H1 (cell line): ENCODE measurements at regions of chr12 and their contacts with region 1.

Region 1: DNA sequence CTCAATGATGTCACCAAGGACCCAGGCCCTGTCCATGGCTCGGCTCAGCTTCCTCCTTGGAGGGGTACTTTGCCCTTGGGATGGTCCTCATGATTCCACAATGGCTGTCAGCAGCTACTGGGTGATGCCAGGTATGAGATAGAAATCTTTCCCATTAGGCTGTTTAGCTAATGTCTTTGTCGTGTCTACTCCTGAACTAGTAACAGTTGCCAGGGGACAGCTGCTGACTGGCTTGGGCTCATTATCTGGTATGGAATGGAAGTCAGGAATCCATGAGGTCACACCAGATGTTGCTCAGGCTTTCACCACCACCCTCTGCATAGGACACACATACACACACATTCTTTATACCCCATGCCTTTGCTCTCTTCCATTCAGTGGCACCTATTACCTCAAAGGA is 9.2 kb downstream of the PRPH start:
- DNase-seq: no peak
- H3K4me3 ChIP-seq: no peak overlapping the region
- H3K27ac ChIP-seq: no peak overlapping the region
- H3K4me1 ChIP-seq: no peaks in the 10 kb centered on the region
- H3K27me3 ChIP-seq: no peaks in the 10 kb centered on the region; a peak in 4 of 7 replicates
- CTCF ChIP-seq: no peak
- EP300 ChIP-seq: no peak
- POLR2A ChIP-seq: no peak
- RAD21 ChIP-seq: no peak

Region 2: GRCh38 chr12:49161092-49161795 is 142.9 kb before region 1 on chr12:
- CTCF ChIA-PET with region 1: no interaction called
- POLR2A ChIA-PET with region 1: no interaction called
- DNase-seq: no peak
- H3K4me3 ChIP-seq: no peak overlapping the region
- H3K27ac ChIP-seq: no peak overlapping the region
- H3K4me1 ChIP-seq: peaks cover 0 to 3% (median 0%) of the 10 kb centered on the region in 4 experiments; a peak in 1 of 7 replicates
- H3K27me3 ChIP-seq: no peaks in the 10 kb centered on the region
- CTCF ChIP-seq: no peak
- EP300 ChIP-seq: no peak
- POLR2A ChIP-seq: no peak
- RAD21 ChIP-seq: no peak

Region 3: GRCh38 chr12:49288412-49288853 is 15.7 kb before region 1 on chr12:
- CTCF ChIA-PET with region 1: interaction called, 172 read pairs
- POLR2A ChIA-PET with region 1: no interaction called
- DNase-seq: peak in 1 of 2 experiments; percentile 82
- H3K4me3 ChIP-seq: no peak overlapping the region
- H3K27ac ChIP-seq: no peak overlapping the region
- H3K4me1 ChIP-seq: peaks cover 0 to 9% (median 7%) of the 10 kb centered on the region in 4 experiments; a peak in 5 of 7 replicates
- H3K27me3 ChIP-seq: peaks cover 4 to 17% (median 16%) of the 10 kb centered on the region in 4 experiments
- CTCF ChIP-seq: peak in 2 of 3 experiments; percentile 79 to 87; a peak in 3 of 4 replicates
- EP300 ChIP-seq: no peak
- POLR2A ChIP-seq: no peak
- RAD21 ChIP-seq: peak; percentile 84 to 86

Region 4: DNA sequence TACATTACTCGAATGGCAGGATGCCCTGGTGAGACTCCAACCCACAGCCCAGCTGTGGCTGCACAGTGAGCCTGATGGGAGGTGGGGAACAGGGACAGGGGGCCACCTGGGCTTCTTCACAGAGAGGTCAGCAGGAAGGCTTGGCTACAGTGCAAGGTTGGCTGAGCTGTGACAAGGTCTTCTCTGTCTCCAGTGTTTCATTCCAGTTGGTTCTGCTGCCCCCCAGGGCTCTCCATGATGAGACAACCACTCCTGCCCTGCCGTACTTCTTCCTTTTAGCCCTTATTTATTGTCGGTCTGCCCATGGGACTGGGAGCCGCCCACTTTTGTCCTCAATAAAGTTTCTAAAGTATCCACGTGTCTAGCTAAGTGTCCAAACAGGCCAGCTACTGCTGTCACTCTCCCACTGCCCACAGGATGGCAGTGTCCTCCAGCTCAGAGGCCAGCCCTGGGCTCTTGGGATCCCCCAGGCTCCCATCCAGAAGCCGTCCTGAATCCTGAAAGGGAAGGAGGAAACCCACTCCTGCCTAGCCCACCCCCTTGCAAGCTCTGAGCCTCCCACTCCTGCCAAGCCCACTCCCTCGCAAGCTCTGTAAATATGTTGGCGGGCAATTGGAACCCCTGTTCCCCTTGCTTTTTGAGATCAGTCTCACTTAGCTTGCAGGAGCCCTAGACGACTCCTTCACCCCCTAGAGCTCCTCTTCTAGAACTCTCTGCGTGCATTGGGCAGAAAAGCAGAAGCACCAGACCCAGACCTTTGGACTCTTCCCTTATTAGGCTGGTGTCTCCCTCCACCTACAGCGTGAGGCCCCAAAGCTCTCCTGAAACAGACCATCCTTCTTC is 27.4 kb after region 1 on chr12:
- CTCF ChIA-PET with region 1: interaction called, 276 read pairs
- POLR2A ChIA-PET with region 1: no interaction called
- DNase-seq: peak in 1 of 2 experiments; percentile 68
- H3K4me3 ChIP-seq: no peak overlapping the region
- H3K27ac ChIP-seq: no peak overlapping the region
- H3K4me1 ChIP-seq: no peaks in the 10 kb centered on the region; a peak in 2 of 7 replicates
- H3K27me3 ChIP-seq: peaks cover 33 to 50% (median 43%) of the 10 kb centered on the region in 4 experiments
- CTCF ChIP-seq: peak; percentile 86 to 89 (median 88)
- EP300 ChIP-seq: no peak
- POLR2A ChIP-seq: no peak
- RAD21 ChIP-seq: peak; percentile 86 to 93

Region 5: GRCh38 chr12:49375406-49375805 is 71.2 kb after region 1 on chr12:
- CTCF ChIA-PET with region 1: no interaction called
- POLR2A ChIA-PET with region 1: no interaction called
- DNase-seq: no peak
- H3K4me3 ChIP-seq: no peak overlapping the region
- H3K27ac ChIP-seq: no peak overlapping the region
- H3K4me1 ChIP-seq: no peaks in the 10 kb centered on the region
- H3K27me3 ChIP-seq: no peaks in the 10 kb centered on the region
- CTCF ChIP-seq: no peak
- EP300 ChIP-seq: no peak
- POLR2A ChIP-seq: no peak
- RAD21 ChIP-seq: no peak

Region 6: GRCh38 chr12:49400304-49400703 is 96.1 kb after region 1 on chr12:
- CTCF ChIA-PET with region 1: no interaction called
- POLR2A ChIA-PET with region 1: no interaction called
- DNase-seq: no peak
- H3K4me3 ChIP-seq: no peak overlapping the region
- H3K27ac ChIP-seq: no peak overlapping the region
- H3K4me1 ChIP-seq: peaks cover 0 to 2% (median 0%) of the 10 kb centered on the region in 4 experiments; a peak in 2 of 7 replicates
- H3K27me3 ChIP-seq: no peaks in the 10 kb centered on the region
- CTCF ChIP-seq: no peak
- EP300 ChIP-seq: no peak
- POLR2A ChIP-seq: no peak
- RAD21 ChIP-seq: no peak